ENCODE measurements at regions of chr4 and their contacts with region 1.

Region 1: DNA sequence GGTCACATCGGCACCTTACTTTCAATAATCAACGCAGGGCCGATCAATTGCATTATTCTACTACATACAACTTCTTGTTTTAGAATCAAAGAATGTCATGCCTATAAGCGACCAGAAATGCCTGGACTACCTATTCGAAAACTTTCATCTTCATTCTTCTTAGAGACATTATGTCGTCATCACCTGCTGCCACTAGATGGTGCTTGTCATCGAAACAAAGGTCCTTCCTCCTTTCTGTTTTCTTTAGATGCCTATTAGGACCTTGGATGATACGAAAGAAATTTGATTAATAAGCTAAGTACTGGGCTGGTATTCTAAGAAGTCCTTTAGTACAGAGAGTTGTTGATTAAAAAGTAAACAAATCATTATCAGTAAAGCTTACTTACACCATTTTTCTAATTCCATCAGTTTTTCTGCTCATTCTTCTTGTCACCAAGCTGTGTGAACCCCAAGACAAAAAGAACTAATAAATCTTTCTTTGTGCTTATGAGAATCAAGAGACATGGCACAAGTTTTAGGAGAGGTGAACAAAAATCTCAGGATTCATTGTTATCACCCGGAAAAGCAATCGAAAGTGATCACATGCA is 154.5 kb upstream of the SLC4A4 start:
- DNase-seq: peak; percentile 13
- ATAC-seq: peak; percentile 90
- H3K4me3 ChIP-seq: no peak overlapping the region
- H3K27ac ChIP-seq: no peak overlapping the region
- H3K4me1 ChIP-seq: no peaks in the 10 kb centered on the region
- H3K27me3 ChIP-seq: peaks cover 5 to 24% of the 10 kb centered on the region in 2 experiments
- CTCF ChIP-seq: peak; percentile 64 to 75 (median 72)
- EP300 ChIP-seq: no peak
- POLR2A ChIP-seq: no peak
- RAD21 ChIP-seq: peak; percentile 75

Region 2: DNA sequence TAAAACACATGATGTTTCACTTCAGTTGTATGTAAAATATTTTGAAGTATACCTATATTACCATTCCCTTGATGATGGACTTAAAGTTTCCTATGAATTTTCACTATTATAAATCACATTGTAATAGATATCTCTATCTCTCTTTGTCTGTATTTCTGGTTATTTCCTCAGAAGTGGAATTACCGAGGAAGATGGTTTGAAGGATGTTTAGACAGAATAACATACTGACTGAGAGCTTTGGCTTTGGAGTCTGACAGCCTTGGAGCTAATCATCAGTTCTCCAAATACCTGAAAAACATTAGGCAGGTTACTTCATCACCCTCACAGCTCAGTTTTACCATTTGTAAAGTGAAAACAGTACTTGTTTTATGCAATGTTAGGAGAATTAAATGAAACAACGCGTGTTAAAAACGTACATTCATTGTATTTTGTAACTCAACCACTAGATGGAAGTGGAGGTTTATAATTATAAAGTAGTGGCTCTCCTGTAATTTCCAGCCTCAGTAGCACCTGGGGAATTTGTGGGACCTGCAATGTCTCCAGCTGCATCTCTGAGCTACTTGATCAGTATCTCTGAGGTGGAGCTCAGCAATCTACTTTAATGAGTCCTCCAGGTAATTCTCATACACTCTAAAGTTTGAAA is 532.3 kb before region 1 on chr4:
- CTCF ChIA-PET with region 1: interaction called, 9 read pairs
- POLR2A ChIA-PET with region 1: no interaction called
- RAD21 ChIA-PET with region 1: no interaction called
- SMC1A ChIA-PET with region 1: no interaction called
- in situ Hi-C with region 1: no loop called
- intact Hi-C with region 1: loop called (anchors 10 kb)
- DNase-seq: no peak
- ATAC-seq: peak; percentile 68
- H3K4me3 ChIP-seq: no peak overlapping the region
- H3K27ac ChIP-seq: no peak overlapping the region
- H3K4me1 ChIP-seq: no peaks in the 10 kb centered on the region
- H3K27me3 ChIP-seq: no peaks in the 10 kb centered on the region
- CTCF ChIP-seq: peak; percentile 20 to 60 (median 52); a peak in 4 of 6 replicates
- EP300 ChIP-seq: no peak
- POLR2A ChIP-seq: no peak
- RAD21 ChIP-seq: peak; percentile 72

Region 3: DNA sequence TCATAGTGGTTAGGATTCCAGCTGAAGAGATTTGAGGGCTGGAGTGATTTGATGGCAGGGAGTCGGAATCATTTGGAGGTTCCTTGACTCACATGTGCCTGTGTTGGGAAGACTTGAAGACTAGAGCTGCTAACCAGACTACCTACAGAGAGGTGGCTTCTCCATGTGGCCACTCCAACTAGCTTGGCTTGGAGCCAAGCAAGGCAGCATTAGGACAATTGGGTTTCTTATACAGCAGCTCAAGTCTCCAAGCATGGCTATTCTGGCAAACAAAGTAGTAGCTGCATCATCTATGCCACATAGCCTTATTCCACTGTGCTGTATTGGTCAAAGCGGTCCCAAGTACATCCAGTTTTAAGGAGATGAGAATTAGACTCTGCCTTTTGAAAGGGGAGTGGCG is 17.2 kb before region 1 on chr4:
- CTCF ChIA-PET with region 1: no interaction called
- POLR2A ChIA-PET with region 1: no interaction called
- RAD21 ChIA-PET with region 1: no interaction called
- SMC1A ChIA-PET with region 1: no interaction called
- in situ Hi-C with region 1: no loop called
- intact Hi-C with region 1: no loop called
- DNase-seq: no peak
- ATAC-seq: no peak
- H3K4me3 ChIP-seq: no peak overlapping the region
- H3K27ac ChIP-seq: no peak overlapping the region
- H3K4me1 ChIP-seq: no peaks in the 10 kb centered on the region
- H3K27me3 ChIP-seq: no peaks in the 10 kb centered on the region
- CTCF ChIP-seq: no peak
- EP300 ChIP-seq: no peak
- POLR2A ChIP-seq: no peak
- RAD21 ChIP-seq: no peak

Region 4: GRCh38 chr4:71229477-71230270 is 45.4 kb after region 1 on chr4:
- CTCF ChIA-PET with region 1: interaction called, 13 read pairs
- POLR2A ChIA-PET with region 1: no interaction called
- RAD21 ChIA-PET with region 1: no interaction called
- SMC1A ChIA-PET with region 1: interaction called, 5 read pairs
- in situ Hi-C with region 1: no loop called
- intact Hi-C with region 1: no loop called
- DNase-seq: no peak
- ATAC-seq: peak; percentile 78
- H3K4me3 ChIP-seq: no peak overlapping the region
- H3K27ac ChIP-seq: no peak overlapping the region
- H3K4me1 ChIP-seq: no peaks in the 10 kb centered on the region
- H3K27me3 ChIP-seq: peaks cover 0 to 2% of the 10 kb centered on the region in 2 experiments; a peak in 2 of 4 replicates
- CTCF ChIP-seq: peak; percentile 40 to 66 (median 66)
- EP300 ChIP-seq: no peak
- POLR2A ChIP-seq: no peak
- RAD21 ChIP-seq: peak; percentile 86

Region 5: DNA sequence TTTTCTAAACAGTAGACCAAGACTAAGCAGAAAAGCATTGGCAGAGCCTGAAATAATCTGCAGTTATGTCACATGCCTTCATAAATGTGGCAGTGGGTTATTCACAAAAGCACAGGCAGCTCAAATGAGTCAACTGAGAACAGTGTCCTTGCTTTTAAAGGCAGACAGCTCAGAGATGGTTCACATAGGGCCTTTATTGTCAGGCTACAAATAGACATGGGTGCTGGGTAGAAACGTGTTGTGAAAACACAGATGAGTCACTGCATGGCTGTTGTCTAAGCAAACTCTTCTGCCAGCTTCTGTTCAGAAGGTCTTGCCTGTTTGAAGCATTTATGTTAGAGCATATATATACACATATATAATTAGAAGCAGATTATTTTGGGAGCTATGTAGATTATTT is 272.6 kb after region 1 on chr4:
- CTCF ChIA-PET with region 1: no interaction called
- POLR2A ChIA-PET with region 1: no interaction called
- RAD21 ChIA-PET with region 1: no interaction called
- SMC1A ChIA-PET with region 1: no interaction called
- in situ Hi-C with region 1: no loop called
- intact Hi-C with region 1: no loop called
- DNase-seq: no peak
- ATAC-seq: no peak
- H3K4me3 ChIP-seq: no peak overlapping the region
- H3K27ac ChIP-seq: no peak overlapping the region
- H3K4me1 ChIP-seq: no peaks in the 10 kb centered on the region
- H3K27me3 ChIP-seq: no peaks in the 10 kb centered on the region
- CTCF ChIP-seq: no peak
- EP300 ChIP-seq: no peak
- POLR2A ChIP-seq: no peak
- RAD21 ChIP-seq: no peak

Region 6: DNA sequence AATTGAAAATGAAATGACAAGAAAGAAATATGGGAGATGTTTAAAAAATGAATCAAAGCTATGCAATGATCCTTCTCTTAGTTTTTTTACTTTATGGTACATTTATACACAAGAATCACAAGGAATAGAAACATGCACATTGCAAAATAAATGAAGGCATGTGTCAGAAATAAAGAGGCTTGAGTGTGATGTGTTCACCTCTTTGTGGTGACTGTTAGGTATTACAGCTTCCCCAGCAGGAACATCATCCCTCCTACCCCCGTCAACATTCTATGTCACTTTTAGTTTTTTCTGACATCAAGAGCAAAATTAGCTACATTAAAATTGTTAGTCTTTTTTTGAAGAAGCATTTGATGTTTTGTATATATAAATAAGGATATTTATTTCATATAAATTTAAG is 369.3 kb after region 1 on chr4:
- CTCF ChIA-PET with region 1: interaction called, 4 read pairs
- POLR2A ChIA-PET with region 1: no interaction called
- RAD21 ChIA-PET with region 1: interaction called, 6 read pairs
- SMC1A ChIA-PET with region 1: interaction called, 6 read pairs
- in situ Hi-C with region 1: no loop called
- intact Hi-C with region 1: loop called (anchors 2 kb)
- DNase-seq: no peak
- ATAC-seq: peak; percentile 66
- H3K4me3 ChIP-seq: no peak overlapping the region
- H3K27ac ChIP-seq: no peak overlapping the region
- H3K4me1 ChIP-seq: no peaks in the 10 kb centered on the region
- H3K27me3 ChIP-seq: no peaks in the 10 kb centered on the region; a peak in 1 of 4 replicates
- CTCF ChIP-seq: peak in 2 of 3 experiments; percentile 37 to 39; a peak in 3 of 6 replicates
- EP300 ChIP-seq: no peak
- POLR2A ChIP-seq: no peak
- RAD21 ChIP-seq: peak; percentile 69

Measured in GM12878 (cell line).